Endothelial cell of umbilical vein (primary cell): ENCODE measurements at regions of chr3 and their contacts with region 1.

Region 1: DNA sequence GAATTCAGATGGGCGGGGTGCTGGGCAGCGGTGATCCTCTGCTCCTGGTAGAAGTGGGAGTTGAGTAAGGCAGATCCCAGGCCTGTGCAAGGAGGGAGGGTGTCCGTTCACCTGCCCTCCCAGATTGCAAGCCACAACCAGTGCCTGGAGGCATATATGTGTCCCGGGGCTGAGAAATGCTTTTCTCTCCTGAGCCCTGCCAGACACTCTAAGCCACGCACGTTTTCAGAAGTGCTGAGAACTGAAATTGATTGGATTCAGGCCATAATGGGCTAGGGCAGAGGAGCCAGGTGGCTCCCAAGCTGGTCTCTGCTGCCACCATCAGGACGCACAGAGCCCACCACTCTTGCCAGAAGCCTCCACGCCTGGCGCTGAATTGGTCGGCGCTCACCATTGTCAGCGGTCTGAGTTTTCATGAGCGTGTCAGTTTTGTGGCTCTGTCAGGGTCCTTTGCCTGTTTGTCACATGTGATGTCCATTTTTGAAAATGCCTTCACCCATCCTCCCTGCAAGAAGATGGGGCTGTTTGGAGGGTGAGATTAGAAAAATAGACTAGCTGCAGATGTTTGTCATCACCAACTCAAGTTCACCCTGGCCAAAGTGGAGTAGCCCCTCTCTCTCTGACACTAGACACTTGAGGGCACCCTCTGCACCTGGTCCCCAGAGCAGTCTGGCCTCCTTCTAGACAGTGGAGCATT is 15.4 kb upstream of the BFSP2 start:
- DNase-seq: peak; percentile 71
- H3K4me3 ChIP-seq: no peak overlapping the region
- H3K27ac ChIP-seq: no peak overlapping the region
- H3K4me1 ChIP-seq: peaks cover 8% of the 10 kb centered on the region
- H3K27me3 ChIP-seq: peaks cover 0 to 2% of the 10 kb centered on the region in 2 experiments
- CTCF ChIP-seq: peak; percentile 93 to 96
- POLR2A ChIP-seq: no peak

Region 2: GRCh38 chr3:132730891-132731580 is 653.4 kb before region 1 on chr3:
- CTCF ChIA-PET with region 1: interaction called, 135 read pairs
- POLR2A ChIA-PET with region 1: no interaction called
- dilution Hi-C with region 1: no loop called
- intact Hi-C with region 1: loop called (anchors 1 kb)
- DNase-seq: peak; percentile 61
- H3K4me3 ChIP-seq: no peak overlapping the region
- H3K27ac ChIP-seq: no peak overlapping the region
- H3K4me1 ChIP-seq: peaks cover 2% of the 10 kb centered on the region
- H3K27me3 ChIP-seq: peaks cover 7 to 18% of the 10 kb centered on the region in 2 experiments
- CTCF ChIP-seq: peak; percentile 27 to 40
- POLR2A ChIP-seq: no peak

Region 3: DNA sequence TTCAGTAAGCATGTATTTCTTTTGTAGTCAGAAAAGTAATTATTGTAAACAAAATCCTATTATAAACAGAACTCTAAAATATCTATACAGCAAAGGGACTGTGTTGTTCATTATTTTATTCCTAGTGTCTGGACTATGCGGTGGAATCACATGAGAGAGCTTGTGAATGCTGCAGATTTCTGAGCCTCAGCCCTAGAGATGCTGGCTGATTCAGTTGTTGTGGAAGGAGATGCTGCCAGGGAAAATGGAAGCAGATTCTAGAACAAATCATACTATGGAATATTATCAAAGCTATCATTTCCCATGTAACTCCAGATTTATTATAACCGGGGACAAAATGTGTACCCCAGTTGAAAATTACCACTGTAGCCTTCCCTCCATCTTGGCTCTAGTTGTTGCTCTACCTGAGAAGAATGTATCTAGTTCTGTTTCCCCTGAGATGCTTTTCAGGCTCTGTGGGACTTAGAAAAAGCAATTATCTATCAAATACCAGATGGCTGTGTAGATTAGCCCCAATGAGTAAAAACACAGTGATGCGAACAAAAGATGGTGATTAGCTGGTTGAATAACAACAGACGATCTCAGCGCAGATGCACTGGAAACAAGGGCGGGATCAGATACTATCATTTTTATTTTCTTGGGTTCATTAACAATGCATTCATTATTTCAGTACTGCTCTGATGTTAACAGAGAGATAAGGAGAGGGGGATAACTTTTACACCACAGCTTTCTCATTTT is 215.0 kb before region 1 on chr3:
- CTCF ChIA-PET with region 1: no interaction called
- POLR2A ChIA-PET with region 1: no interaction called
- dilution Hi-C with region 1: no loop called
- intact Hi-C with region 1: loop called (anchors 5 kb)
- DNase-seq: no peak
- H3K4me3 ChIP-seq: no peak overlapping the region
- H3K27ac ChIP-seq: no peak overlapping the region
- H3K4me1 ChIP-seq: no peaks in the 10 kb centered on the region
- H3K27me3 ChIP-seq: no peaks in the 10 kb centered on the region
- CTCF ChIP-seq: no peak
- POLR2A ChIP-seq: no peak

Region 4: GRCh38 chr3:133230195-133230594 is 154.3 kb before region 1 on chr3:
- CTCF ChIA-PET with region 1: no interaction called
- POLR2A ChIA-PET with region 1: no interaction called
- dilution Hi-C with region 1: no loop called
- intact Hi-C with region 1: no loop called
- DNase-seq: no peak
- H3K4me3 ChIP-seq: no peak overlapping the region
- H3K27ac ChIP-seq: no peak overlapping the region
- H3K4me1 ChIP-seq: no peaks in the 10 kb centered on the region
- H3K27me3 ChIP-seq: no peaks in the 10 kb centered on the region
- CTCF ChIP-seq: no peak
- POLR2A ChIP-seq: no peak

Region 5: DNA sequence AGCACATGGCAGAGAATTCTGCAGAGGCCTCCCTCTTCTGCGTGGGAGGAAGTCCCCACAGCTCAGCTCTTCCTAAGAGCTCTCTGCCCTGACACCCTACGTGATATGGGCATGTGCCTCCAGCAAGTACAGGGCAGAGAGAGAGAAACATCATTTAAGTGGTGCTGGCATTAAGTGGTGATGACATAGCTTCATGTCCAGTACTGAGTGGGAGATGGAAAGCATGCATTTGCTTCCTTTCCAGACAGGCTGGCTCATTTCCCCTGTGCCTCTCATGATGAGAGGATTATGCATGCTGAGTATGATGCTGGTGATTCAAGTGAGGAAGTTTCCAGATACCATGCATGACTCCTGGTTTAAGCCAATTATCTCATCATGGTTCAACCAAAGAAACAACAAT is 42.2 kb after region 1 on chr3:
- CTCF ChIA-PET with region 1: interaction called, 16 read pairs
- POLR2A ChIA-PET with region 1: no interaction called
- dilution Hi-C with region 1: no loop called
- intact Hi-C with region 1: loop called (anchors 1 kb)
- DNase-seq: no peak
- H3K4me3 ChIP-seq: no peak overlapping the region
- H3K27ac ChIP-seq: no peak overlapping the region
- H3K4me1 ChIP-seq: no peaks in the 10 kb centered on the region
- H3K27me3 ChIP-seq: peaks cover 0 to 12% of the 10 kb centered on the region in 2 experiments
- CTCF ChIP-seq: no peak
- POLR2A ChIP-seq: no peak